ENCODE measurements at regions of chr1 and their contacts with region 1.

Region 1: GRCh38 chr1:70115315-70115714 is 90.1 kb downstream of the LRRC40 start:
- DNase-seq: no peak
- ATAC-seq: no peak

Region 2: DNA sequence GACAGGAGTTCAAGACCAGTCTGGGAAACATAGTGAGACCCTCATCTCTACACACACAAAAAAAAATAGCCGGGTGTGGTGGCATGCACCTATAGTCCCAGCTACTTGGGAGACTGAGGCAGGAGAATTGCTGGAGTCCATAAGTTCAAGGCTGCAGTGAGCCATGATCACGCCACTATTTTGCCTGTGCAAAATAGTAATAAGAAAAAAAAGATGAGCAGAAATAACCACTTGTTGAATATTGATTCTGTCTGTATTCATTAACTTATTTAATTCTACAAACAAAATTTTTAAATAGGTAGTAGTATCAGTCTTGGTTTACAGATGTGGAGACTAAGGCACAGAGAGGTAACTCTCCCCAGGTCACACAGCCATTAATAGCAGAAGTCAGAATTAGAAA is 73.2 kb after region 1 on chr1:
- intact Hi-C with region 1: loop called (anchors 2 kb)
- DNase-seq: no peak
- ATAC-seq: no peak

Measured in sciatic nerve (tissue), 2 donors.